Left ventricle myocardium inferior (tissue), 1 donor: ENCODE measurements at regions of chr2 and their contacts with region 1.

Region 1: DNA sequence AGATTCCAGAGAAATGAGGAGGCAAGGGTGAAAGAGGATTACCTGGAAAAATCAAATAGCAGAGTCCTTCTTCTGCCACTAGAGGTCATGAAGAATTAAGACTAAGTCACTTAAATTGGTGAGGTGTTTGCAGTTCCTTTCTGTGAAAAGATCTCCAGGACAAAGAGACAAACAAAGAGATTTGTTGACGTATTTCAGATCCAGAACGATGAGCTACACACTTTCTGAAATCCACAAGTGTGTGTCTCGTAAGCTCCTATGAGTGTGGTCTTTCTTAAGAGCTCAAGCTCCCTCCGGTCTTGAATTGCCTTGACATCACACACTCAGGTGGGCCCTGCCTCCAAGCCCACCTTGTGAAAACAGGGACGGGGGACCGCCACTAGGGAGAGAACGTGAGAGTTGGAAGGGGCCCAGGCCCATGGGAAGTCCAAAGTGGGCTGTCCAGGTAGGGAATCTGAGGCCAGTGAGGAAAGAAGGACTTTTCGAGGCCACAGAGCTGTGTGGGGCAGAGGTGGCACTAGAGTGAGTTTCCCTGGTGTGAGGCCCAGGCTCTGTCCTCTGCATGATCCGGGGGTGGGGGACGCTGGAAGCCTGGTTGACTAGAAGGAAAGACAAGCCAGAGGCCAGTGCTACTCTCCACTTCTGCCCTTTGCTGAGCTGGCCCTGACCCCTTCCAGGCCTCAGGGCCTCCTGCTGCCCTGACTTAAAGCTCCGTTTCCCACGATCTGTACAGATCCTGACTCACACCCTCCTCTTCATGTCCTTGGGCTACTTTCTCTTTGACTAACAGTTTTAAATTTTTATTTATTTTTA is 168.1 kb upstream of the NCK2 start:
- DNase-seq: no peak
- H3K4me3 ChIP-seq: no peak overlapping the region
- H3K27ac ChIP-seq: peak overlapping the region; percentile 47
- H3K4me1 ChIP-seq: peaks cover 18% of the 10 kb centered on the region
- H3K27me3 ChIP-seq: peaks cover 5% of the 10 kb centered on the region
- CTCF ChIP-seq: peak; percentile 76

Region 2: DNA sequence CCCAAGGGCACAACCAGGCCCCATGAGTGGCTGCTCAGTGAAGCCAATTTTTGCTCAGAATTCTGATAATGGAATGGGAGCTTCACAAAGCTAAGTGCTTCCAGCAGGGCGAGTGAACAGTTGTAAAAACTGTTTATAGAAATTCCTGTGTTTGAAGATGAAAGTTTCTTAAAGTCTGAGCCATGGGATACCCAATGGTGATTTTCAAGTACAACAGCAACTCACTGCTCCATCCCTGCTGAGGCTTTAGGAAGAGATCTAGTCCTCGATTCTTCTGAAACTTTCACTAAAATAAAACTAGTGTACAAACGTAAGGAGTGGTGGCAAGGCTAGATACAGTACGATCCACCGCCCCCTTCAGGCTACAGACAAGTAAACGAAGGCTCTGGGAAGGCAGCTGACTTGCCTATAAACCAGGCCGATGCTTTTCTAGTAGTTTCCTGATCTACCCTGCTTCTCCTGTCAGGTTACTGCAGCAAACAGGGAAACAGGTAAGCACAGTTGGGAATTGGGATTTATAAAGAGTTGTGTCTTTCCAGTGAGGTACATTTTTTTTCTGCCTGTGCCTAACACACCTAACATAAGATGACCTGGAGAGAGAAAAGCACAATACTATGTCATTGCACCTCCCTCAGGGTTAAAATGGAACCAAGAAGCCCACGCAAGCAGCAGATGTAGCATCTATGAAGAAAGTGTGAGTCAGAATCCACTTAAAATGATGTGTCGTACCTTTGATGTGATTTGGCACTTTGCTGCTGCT is 508.7 kb after region 1 on chr2:
- intact Hi-C with region 1: loop called (anchors 5 kb)
- DNase-seq: no peak
- H3K4me3 ChIP-seq: no peak overlapping the region
- H3K27ac ChIP-seq: no peak overlapping the region
- H3K4me1 ChIP-seq: no peaks in the 10 kb centered on the region
- H3K27me3 ChIP-seq: no peaks in the 10 kb centered on the region
- CTCF ChIP-seq: peak; percentile 66